ENCODE measurements at regions of chr1 and their contacts with region 1.

Region 1: GRCh38 chr1:210311726-210312493 is 16.8 kb upstream of the HHAT start:
- DNase-seq: no peak
- ATAC-seq: peak; percentile 31 to 40; a peak in 4 of 6 replicates
- H3K4me3 ChIP-seq: peak overlapping the region; percentile 49
- H3K27ac ChIP-seq: peak overlapping the region; percentile 53 to 80; a peak in 5 of 6 replicates
- H3K4me1 ChIP-seq: 0 out of 3 replicates have a peak, but pooled peaks cover 3% of the 10 kb centered on the region
- CTCF ChIP-seq: no peak
- EP300 ChIP-seq: no peak
- POLR2A ChIP-seq: no peak
- RAD21 ChIP-seq: no peak

Region 2: GRCh38 chr1:210143465-210144062 is 168.3 kb before region 1 on chr1:
- CTCF ChIA-PET with region 1: interaction called, 75 read pairs
- POLR2A ChIA-PET with region 1: no interaction called
- DNase-seq: peak; percentile 57 to 75
- ATAC-seq: peak; percentile 47 to 71; a peak in 4 of 6 replicates
- H3K4me3 ChIP-seq: no peak overlapping the region
- H3K27ac ChIP-seq: no peak overlapping the region
- H3K4me1 ChIP-seq: 0 out of 3 replicates have a peak, but pooled peaks cover 3% of the 10 kb centered on the region
- CTCF ChIP-seq: peak; percentile 84
- EP300 ChIP-seq: no peak
- POLR2A ChIP-seq: no peak
- RAD21 ChIP-seq: peak; percentile 88 to 91

Region 3: GRCh38 chr1:210151052-210151672 is 160.7 kb before region 1 on chr1:
- CTCF ChIA-PET with region 1: interaction called, 13 read pairs
- POLR2A ChIA-PET with region 1: no interaction called
- DNase-seq: no peak
- ATAC-seq: no peak
- H3K4me3 ChIP-seq: no peak overlapping the region
- H3K27ac ChIP-seq: no peak overlapping the region
- H3K4me1 ChIP-seq: peaks cover 9% of the 10 kb centered on the region; the same call in 2 of the 3 replicates
- CTCF ChIP-seq: no peak
- EP300 ChIP-seq: no peak
- POLR2A ChIP-seq: no peak
- RAD21 ChIP-seq: no peak

Region 4: DNA sequence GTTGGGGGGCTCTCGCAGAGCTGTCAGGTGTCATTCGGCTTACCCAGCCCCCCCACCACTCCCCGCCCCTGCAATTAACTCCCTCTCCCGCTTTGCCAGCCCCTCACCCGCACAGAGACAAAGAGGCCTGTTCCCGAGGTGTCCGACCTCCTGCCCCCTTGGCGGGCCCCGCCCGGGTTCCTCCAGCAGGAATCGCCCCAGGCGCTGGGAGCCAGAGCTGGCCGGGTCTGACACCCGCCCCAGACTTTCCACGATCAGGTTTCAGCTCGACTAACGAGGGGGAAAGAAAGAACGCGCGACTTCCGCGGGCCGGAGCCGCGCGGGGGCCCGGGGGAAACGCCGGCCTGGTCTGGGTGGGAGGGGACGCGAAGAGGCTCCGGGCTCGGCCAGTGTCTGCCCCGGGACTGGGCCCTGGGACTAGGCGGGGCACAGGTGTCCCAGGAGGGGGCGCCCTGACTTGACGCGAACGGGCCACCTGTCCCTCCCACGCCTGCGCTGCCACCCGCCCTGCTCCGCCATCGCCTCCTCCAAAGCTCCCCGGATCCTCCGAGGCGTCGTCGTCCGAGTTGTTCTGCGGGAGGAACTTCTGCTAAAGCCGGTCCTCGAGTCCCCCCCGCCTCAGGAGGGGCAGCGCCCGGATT is 19.6 kb before region 1 on chr1:
- CTCF ChIA-PET with region 1: interaction called, 26 read pairs
- POLR2A ChIA-PET with region 1: no interaction called
- DNase-seq: peak; percentile 49 to 59
- ATAC-seq: peak; percentile 92 to 94
- H3K4me3 ChIP-seq: peak overlapping the region; percentile 44
- H3K27ac ChIP-seq: peak overlapping the region; percentile 58 to 85
- H3K4me1 ChIP-seq: 0 out of 3 replicates have a peak, but pooled peaks cover 3% of the 10 kb centered on the region
- CTCF ChIP-seq: peak; percentile 49
- EP300 ChIP-seq: no peak
- POLR2A ChIP-seq: no peak
- RAD21 ChIP-seq: no peak

Region 5: DNA sequence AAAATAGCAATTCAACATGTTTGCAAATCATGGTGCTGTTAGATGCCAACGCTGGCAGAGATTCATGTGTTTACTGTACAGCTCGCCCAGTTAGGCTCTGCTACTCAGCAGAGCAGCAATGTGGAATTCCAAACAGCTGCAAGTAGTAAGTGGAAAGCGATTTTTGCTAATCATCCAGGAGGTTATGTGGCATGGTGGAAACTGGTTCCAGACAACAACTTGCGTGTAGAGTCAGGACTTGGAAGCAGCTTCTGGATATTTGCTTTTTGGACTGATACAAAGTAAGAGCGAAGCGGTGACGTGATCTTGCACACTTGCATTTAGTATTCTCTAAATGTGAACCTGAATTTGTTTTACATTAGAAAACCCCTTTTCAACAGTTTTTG is 10.3 kb before region 1 on chr1:
- CTCF ChIA-PET with region 1: interaction called, 26 read pairs
- POLR2A ChIA-PET with region 1: no interaction called
- DNase-seq: no peak
- ATAC-seq: no peak
- H3K4me3 ChIP-seq: no peak overlapping the region
- H3K27ac ChIP-seq: no peak overlapping the region
- H3K4me1 ChIP-seq: no peaks in the 10 kb centered on the region
- CTCF ChIP-seq: no peak
- EP300 ChIP-seq: no peak
- POLR2A ChIP-seq: no peak
- RAD21 ChIP-seq: no peak

Region 6: GRCh38 chr1:210584439-210585113 is 272.7 kb after region 1 on chr1:
- CTCF ChIA-PET with region 1: no interaction called
- POLR2A ChIA-PET with region 1: no interaction called
- DNase-seq: peak; percentile 86 to 94
- ATAC-seq: peak; percentile 97 to 99
- H3K4me3 ChIP-seq: no peak overlapping the region
- H3K27ac ChIP-seq: peak overlapping the region; percentile 64 to 79
- H3K4me1 ChIP-seq: peaks cover 14% of the 10 kb centered on the region
- CTCF ChIP-seq: peak; percentile 96
- EP300 ChIP-seq: no peak
- POLR2A ChIP-seq: no peak
- RAD21 ChIP-seq: peak; percentile 99